ENCODE measurements at regions of chr5 and their contacts with region 1.

Region 1: GRCh38 chr5:178069909-178070308 is 43.4 kb upstream of the N4BP3 start:
- DNase-seq: peak; percentile 75
- ATAC-seq: peak; percentile 78
- H3K4me3 ChIP-seq: no peak overlapping the region
- H3K4me3 Mint-ChIP-seq: no peak overlapping the region
- H3K27ac ChIP-seq: no peak overlapping the region
- H3K27ac Mint-ChIP-seq: no peak overlapping the region
- H3K4me1 ChIP-seq: peaks cover 26 to 27% of the 10 kb centered on the region in 2 donors
- H3K4me1 Mint-ChIP-seq: peaks cover 16% of the 10 kb centered on the region
- H3K27me3 ChIP-seq: peaks cover 0 to 18% (median 4%) of the 10 kb centered on the region in 4 experiments
- H3K27me3 Mint-ChIP-seq: peaks cover 18% of the 10 kb centered on the region
- CTCF ChIP-seq: peak; percentile 63

Region 2: GRCh38 chr5:177982072-177982727 is 87.7 kb before region 1 on chr5:
- CTCF ChIA-PET with region 1: no interaction called
- POLR2A ChIA-PET with region 1: no interaction called
- intact Hi-C with region 1: loop called (anchors 10 kb)
- DNase-seq: peak; percentile 29
- ATAC-seq: no peak
- H3K4me3 ChIP-seq: no peak overlapping the region
- H3K4me3 Mint-ChIP-seq: no peak overlapping the region
- H3K27ac ChIP-seq: no peak overlapping the region
- H3K27ac Mint-ChIP-seq: no peak overlapping the region
- H3K4me1 ChIP-seq: peaks cover 8 to 21% of the 10 kb centered on the region in 2 donors
- H3K4me1 Mint-ChIP-seq: peaks cover 2% of the 10 kb centered on the region
- H3K27me3 ChIP-seq: peaks cover 0 to 59% (median 29%) of the 10 kb centered on the region in 4 experiments
- H3K27me3 Mint-ChIP-seq: peaks cover 54% of the 10 kb centered on the region
- CTCF ChIP-seq: no peak

Region 3: DNA sequence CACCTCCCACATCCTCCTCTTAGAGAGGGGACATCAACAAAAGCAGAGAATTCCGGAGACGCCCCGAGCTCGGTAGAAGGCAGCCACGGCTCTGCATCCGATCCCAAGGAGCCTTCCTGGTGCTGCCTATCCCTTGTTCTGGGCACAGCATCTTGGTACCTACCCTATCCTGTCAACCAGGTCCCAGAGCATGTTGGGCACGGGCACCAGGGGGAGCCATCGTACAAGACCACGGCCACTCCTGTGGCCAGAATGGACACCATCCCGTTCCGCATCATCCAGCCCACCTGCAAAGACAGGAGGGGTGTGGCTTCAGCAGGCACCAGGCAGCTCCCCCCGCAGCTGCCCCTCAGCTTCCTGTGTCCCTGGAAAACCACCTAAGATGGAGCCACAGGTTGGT is 723.2 kb after region 1 on chr5:
- CTCF ChIA-PET with region 1: no interaction called
- POLR2A ChIA-PET with region 1: no interaction called
- intact Hi-C with region 1: no loop called
- DNase-seq: no peak
- ATAC-seq: no peak
- H3K4me3 ChIP-seq: no peak overlapping the region
- H3K4me3 Mint-ChIP-seq: no peak overlapping the region
- H3K27ac ChIP-seq: no peak overlapping the region
- H3K27ac Mint-ChIP-seq: no peak overlapping the region
- H3K4me1 ChIP-seq: no peaks in the 10 kb centered on the region
- H3K4me1 Mint-ChIP-seq: no peaks in the 10 kb centered on the region
- H3K27me3 ChIP-seq: no peaks in the 10 kb centered on the region
- H3K27me3 Mint-ChIP-seq: no peaks in the 10 kb centered on the region
- CTCF ChIP-seq: no peak

Measured in B cell (primary cell).